Posterior vena cava (tissue), 2 donors: ENCODE measurements at regions of chr12 and their contacts with region 1.

Region 1: DNA sequence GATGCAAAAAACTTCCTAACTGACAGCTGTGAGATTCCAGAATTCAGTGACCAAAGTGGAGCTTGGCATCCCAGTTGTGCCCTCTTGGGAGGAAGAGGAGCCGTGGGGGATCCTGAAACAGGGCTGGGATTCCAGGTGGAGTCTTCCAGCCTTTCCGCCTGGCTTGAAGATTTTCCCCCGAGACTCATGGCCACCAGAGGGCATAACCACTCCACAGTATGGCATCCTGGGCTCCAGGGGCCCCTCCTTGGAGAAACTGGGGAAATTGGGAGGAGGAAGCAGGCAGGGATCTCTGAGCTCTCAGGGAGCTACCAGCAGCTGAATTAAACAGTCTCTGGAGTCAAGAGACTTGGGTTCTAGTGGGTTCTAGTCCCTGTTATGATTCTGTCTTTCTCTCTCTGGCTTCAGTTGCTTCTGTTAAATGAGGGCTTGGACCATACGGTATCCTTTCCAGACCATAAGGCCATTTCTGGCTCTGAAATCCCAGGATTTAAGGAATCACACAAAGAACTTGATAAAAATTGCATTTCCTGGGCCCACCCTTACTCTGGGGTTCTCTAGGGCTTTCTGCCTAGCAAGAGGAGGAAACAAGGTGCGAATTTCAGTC is 2.6 kb upstream of the TAMALIN start:
- DNase-seq: no peak

Region 2: DNA sequence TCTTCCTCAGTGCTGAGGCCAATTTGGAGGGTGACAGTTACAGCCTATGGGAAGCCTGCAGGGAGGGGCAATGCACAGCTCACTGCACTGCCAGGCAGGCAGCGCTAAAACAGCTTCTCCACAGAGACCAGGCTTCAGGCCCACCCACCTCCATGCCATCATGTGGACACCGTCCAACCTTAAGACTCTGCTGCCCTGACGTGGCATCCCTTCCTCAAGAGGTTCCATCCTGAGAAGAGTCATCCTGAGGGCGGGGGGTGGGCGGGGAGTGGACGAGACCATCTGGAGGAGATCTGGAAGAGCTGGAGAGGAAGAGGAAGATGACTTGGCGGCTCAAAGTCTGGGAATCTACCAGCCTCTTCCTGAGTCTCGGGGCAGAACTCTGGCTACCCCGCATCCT is 105.2 kb before region 1 on chr12:
- intact Hi-C with region 1: no loop called
- DNase-seq: peak; percentile 43

Region 3: DNA sequence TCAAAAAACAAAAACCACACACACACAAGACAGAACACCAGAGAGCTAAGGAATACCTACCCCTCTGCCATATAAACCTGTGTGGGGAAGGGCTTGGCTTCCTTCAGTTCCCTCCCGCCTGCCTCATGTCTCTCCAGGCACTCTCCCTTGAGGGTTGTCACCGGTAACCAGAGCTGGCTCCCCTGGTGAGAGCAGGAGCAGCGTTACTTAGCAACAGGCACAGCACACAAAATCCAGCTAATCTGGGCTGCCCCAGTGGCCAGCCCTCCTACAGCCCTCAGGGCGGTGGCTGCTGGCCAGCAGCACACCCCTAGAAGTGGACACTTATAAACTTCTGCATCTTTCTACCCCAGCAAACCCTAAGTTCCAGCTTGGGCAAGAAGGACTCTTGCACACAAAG is 25.5 kb after region 1 on chr12:
- intact Hi-C with region 1: loop called in 1 of 2 experiments (anchors 2 kb)
- DNase-seq: no peak